A673 (cell line): ENCODE measurements at regions of chr11 and their contacts with region 1.

Region 1: DNA sequence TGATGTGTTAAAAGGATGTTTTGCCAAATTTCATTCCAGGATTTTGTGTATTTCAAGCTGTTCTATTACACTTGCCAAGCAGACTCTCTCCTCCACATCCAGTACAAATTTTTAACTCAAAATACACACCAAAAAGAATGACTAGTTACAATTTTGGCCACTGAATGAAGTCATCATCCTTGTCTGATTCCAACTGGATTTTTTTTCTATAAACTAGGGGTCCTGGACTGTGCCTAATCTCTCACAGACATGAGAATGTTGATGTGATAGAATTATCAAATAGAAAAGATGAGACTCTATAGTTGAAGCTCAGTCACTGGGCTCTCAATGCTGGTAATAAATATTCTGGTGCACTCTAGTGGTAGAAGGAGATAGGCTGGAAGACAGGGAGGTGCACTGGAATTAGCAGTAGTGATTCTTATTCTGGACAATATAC is 85.8 kb downstream of the FANCF start:
- DNase-seq: peak; percentile 45
- H3K4me3 ChIP-seq: no peak overlapping the region
- H3K27ac ChIP-seq: no peak overlapping the region
- H3K4me1 ChIP-seq: no peaks in the 10 kb centered on the region
- H3K27me3 ChIP-seq: no peaks in the 10 kb centered on the region
- CTCF ChIP-seq: peak; percentile 66

Region 2: DNA sequence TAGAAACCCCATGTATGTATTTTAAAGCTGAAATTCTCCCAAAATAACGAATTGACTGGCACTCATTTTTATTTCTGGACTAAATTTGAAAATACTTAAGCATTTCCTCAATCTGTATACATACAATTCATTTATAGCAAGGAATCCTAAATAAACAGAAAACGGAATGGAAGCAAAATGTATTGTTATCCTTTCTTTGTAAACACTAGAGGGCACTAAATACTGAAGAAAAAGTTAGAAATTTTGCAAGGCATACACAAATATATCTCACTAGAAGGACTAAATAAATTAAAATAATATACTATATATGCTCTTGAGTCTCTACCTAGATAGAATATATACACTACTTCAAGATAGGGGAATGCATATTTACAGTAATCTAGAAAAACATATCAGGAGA is 370.0 kb before region 1 on chr11:
- CTCF ChIA-PET with region 1: no interaction called
- POLR2A ChIA-PET with region 1: no interaction called
- intact Hi-C with region 1: no loop called
- DNase-seq: no peak
- H3K4me3 ChIP-seq: no peak overlapping the region
- H3K27ac ChIP-seq: no peak overlapping the region
- H3K4me1 ChIP-seq: no peaks in the 10 kb centered on the region
- H3K27me3 ChIP-seq: no peaks in the 10 kb centered on the region
- CTCF ChIP-seq: peak; percentile 54

Region 3: GRCh38 chr11:22337596-22338485 is 202.0 kb before region 1 on chr11 and contains the start of gene SLC17A6:
- CTCF ChIA-PET with region 1: no interaction called
- POLR2A ChIA-PET with region 1: no interaction called
- intact Hi-C with region 1: loop called (anchors 2 kb)
- DNase-seq: peak; percentile 67
- H3K4me3 ChIP-seq: no peak within 1 kb of the TSS
- H3K27ac ChIP-seq: no peak within 1 kb of the TSS
- H3K4me1 ChIP-seq: no peaks in the 10 kb centered on the region
- H3K27me3 ChIP-seq: peaks cover 35% of the 10 kb centered on the region
- CTCF ChIP-seq: no peak
- total RNA-seq, gene SLC17A6: not detected in 2 replicates

Region 4: GRCh38 chr11:22426915-22427314 is 112.9 kb before region 1 on chr11:
- CTCF ChIA-PET with region 1: no interaction called
- POLR2A ChIA-PET with region 1: no interaction called
- intact Hi-C with region 1: loop called (anchors 5 kb)
- DNase-seq: peak; percentile 15
- H3K4me3 ChIP-seq: no peak overlapping the region
- H3K27ac ChIP-seq: no peak overlapping the region
- H3K4me1 ChIP-seq: no peaks in the 10 kb centered on the region
- H3K27me3 ChIP-seq: no peaks in the 10 kb centered on the region
- CTCF ChIP-seq: peak; percentile 41; the same call in 1 of the 2 replicates